HEK293T (cell line): ENCODE measurements at regions of chr3 and their contacts with region 1.

Region 1: GRCh38 chr3:65439641-65440284 is 599.0 kb downstream of the MAGI1 start:
- DNase-seq: peak; percentile 61

Region 2: DNA sequence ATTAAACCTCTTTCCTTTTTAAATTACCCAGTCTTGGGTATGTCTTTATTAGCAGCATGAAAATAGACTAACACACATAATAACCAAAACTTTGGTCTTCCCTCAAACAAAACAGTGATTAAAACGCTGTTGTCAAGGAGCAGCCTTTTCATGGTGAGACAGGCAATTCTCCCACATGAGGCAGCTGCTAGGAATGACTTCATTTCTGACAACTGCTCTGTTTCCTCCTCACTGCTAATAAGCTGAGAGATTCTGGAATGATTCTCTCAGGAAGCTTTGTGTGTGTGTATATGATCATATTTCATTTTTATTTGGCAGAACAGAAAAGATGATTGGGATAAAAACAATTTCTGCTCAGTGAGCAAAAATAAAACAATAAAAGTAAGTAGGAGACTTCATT is 171.3 kb before region 1 on chr3:
- CTCF ChIA-PET with region 1: no interaction called
- POLR2A ChIA-PET with region 1: no interaction called
- DNase-seq: no peak

Region 3: DNA sequence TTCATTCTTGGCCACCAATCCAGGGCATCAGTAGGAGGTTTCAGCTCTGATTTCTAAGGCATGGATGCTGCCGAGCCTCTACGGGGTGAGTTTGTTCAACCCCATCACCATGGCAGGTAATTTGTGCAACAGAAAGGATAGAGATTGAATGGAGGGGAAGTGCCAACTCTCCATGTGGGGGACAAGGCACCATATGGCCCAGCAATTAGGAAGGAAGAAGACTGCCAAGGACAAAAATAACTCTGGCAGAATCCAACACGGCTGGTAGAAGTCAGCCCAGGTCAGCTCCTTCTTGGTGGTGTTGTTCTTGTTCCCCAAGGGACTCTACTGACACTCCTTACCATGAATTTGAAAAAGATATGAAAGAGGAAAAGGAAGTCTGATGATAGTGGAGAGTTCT is 95.0 kb after region 1 on chr3:
- CTCF ChIA-PET with region 1: no interaction called
- POLR2A ChIA-PET with region 1: no interaction called
- DNase-seq: no peak

Region 4: DNA sequence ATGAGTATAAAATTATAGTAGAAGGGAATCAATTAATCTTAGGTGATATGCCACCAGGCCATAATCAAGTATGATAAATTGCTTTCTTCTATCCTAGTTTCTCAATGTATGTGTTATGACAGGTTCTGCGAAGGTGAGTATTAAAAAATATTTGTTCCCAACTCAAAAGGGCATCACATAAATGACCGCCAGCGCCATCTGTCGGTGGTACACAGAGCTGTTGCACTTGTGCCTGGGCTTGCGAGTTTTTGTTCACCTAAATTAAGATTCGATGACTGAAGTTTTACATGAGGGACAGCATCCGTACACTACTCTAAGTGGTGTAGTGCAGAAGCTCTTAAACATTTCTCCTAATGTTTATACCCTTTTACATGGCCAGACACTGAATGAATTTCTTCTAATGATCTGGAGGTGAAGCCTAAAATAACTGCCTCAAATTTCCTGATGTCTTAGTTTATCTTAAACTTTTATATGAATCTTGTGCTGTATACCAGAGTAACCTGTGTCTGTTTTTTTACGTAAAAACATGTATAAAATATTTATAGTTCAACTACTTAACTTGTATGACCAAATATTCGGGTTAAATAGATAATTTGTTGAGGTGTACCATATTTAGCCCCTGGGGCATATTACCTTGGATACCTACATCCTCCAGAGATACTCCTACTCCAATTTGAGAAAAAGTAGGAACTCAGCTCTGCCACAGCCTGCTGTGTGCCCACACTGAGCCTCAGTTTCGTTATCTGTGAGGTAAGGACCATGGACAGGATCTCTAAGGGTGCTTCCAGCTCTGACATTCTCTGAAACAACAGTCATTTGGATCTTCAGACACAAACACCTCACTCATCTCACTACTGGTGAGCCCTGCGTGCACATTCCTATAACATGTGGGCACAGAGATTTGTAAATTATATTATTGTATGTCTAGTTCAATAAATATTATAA is 233.4 kb after region 1 on chr3:
- CTCF ChIA-PET with region 1: interaction called, 19 read pairs
- POLR2A ChIA-PET with region 1: no interaction called
- DNase-seq: peak; percentile 55